Gastrocnemius medialis (tissue), 4 donors: ENCODE measurements at regions of chr4 and their contacts with region 1.

Region 1: DNA sequence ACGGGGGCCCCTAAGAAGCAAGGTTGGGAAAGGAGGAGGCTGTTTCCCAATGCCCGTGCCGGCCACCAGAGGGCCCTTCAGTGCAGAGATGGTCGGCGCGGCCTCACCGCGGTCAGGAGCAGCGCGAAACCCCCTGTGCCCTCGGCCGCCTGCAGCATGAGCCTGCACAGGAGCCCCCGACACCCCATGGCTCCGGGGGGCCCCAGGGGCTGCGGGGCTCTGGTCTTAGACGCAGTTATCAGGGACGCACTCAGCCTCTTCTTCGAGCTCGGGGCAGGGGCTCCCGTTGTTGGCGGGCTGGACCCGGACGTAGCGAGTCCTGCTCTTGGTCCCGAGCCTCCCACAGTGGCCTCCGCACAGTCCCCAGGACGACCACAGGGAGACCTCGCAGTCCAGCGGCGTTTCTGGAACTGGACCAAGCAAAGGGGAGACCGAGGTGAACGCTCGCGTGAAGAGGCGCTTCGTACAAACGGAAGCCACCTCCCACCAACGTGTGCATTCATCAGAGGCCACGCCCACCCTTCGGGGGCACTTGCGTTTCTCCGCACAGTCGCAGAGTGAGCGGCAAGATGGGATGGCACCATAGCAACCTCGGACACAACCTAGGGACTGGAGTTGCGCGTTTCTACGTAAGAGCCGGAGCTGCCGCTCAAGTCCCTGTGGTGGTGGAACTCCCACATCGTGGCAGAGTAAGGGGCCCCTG is 5.0 kb downstream of the SPON2 start:
- DNase-seq: peak; percentile 52 to 70
- ATAC-seq: peak; percentile 78 to 82
- H3K4me3 ChIP-seq: peak overlapping the region; percentile 53 to 74 (median 62)
- H3K27ac ChIP-seq: peak overlapping the region in 1 of 4 donors; percentile 16
- H3K4me1 ChIP-seq: peaks cover 12 to 17% of the 10 kb centered on the region in 2 donors
- H3K27me3 ChIP-seq: peaks cover 4 to 21% (median 9%) of the 10 kb centered on the region in 3 donors
- CTCF ChIP-seq: peak; percentile 90 to 94 (median 93)
- POLR2A ChIP-seq: no peak

Region 2: DNA sequence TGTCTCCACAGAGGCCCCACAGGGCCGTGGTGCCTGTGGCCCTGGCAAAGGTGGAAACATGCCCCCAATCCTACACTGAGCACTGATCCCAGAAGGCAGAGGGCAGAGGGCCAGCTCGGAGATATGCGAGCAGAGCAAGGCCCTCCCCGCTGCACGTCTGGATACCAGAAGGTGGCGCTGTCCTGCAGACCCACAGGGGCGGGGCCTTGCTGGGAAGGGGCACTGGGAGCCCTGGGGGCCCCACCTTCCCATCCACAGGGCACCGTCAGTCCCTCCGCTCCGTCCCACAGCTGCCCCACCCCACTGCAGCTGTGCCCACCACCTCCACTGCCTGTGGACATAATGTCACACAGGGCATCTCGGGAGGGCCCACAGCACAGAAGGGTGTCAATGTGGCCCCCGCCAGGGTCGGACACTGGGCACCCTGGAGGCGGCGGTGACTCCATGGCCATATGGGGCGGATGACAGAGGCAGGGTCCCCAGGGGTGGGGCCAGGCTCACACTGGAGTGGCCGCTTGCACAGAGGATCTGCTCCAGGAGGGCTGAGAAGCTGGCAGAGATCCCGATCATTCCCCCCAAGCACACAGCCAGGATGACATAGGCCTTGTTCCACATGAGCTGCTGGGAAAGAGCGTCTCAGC is 483.3 kb before region 1 on chr4:
- in situ Hi-C with region 1: no loop called
- intact Hi-C with region 1: loop called (anchors 10 kb)
- DNase-seq: peak in 1 of 2 donors; percentile 64
- ATAC-seq: peak in 1 of 2 donors; percentile 14
- H3K4me3 ChIP-seq: no peak overlapping the region
- H3K27ac ChIP-seq: no peak overlapping the region
- H3K4me1 ChIP-seq: peaks cover 17 to 30% of the 10 kb centered on the region in 2 donors
- H3K27me3 ChIP-seq: peaks cover 0 to 19% (median 6%) of the 10 kb centered on the region in 3 donors
- CTCF ChIP-seq: peak; percentile 46 to 71 (median 62)
- POLR2A ChIP-seq: no peak

Region 3: DNA sequence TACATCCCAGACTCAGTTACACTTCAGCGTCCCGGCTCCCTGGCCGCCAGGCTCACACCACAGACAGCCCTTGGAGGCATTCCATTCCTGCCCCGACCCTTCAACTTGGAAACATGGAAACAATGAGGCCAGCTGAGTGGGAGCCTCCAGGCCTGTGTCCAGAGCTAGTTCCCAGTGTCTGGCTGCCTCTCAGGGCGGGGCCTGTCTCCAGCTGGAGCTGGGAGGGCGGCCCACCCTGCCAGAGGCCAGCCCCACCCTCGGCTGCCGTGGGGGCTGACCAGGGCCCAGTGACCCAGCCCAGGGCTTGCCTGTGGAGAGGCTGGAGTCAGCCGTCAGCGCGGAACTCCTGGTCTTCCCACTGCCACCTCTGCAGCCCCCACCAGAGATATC is 42.4 kb after region 1 on chr4:
- in situ Hi-C with region 1: no loop called
- intact Hi-C with region 1: loop called (anchors 2 kb)
- DNase-seq: peak in 1 of 2 donors; percentile 57
- ATAC-seq: peak; percentile 35 to 41
- H3K4me3 ChIP-seq: no peak overlapping the region
- H3K27ac ChIP-seq: peak overlapping the region; percentile 14 to 76 (median 60)
- H3K4me1 ChIP-seq: peaks cover 37 to 44% of the 10 kb centered on the region in 2 donors
- H3K27me3 ChIP-seq: no peaks in the 10 kb centered on the region
- CTCF ChIP-seq: no peak
- POLR2A ChIP-seq: no peak

Region 4: DNA sequence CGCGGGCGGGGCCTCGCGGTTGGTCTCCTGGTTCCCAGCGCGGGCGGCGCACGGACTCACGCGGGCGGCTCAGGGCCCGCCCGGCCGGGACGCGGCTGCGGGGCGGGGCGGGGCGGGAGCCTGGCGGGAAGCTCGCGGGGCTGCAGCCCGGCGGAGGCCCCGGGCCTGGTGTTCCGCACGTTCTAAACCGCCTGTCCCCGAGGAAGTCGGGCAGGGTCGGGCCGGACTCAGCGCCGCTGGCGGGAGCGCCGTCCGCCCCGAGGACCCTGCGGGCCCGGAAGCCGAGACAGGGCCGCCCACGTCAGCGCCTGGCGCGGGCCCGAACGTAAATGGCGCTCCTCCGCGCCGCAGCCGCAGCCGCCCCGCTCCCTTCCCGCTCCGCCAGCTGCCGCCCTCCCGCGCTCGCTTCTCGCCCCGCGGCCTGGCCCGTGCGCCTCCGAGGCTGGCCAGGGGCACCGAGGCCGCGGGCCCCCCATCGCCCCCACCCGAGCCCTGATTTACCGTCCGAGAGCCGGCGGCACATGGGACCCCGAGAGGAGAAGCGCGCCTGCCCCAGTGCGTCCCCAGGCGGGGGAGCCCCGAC is 81.8 kb after region 1 on chr4:
- in situ Hi-C with region 1: no loop called
- intact Hi-C with region 1: loop called (anchors 1 kb)
- DNase-seq: peak; percentile 74 to 78
- ATAC-seq: peak; percentile 78 to 80
- H3K4me3 ChIP-seq: peak overlapping the region; percentile 68 to 85 (median 83)
- H3K27ac ChIP-seq: peak overlapping the region; percentile 94 to 97 (median 96)
- H3K4me1 ChIP-seq: peaks cover 45 to 73% of the 10 kb centered on the region in 2 donors
- H3K27me3 ChIP-seq: no peaks in the 10 kb centered on the region
- CTCF ChIP-seq: no peak
- POLR2A ChIP-seq: peak; percentile 23 to 62

Region 5: DNA sequence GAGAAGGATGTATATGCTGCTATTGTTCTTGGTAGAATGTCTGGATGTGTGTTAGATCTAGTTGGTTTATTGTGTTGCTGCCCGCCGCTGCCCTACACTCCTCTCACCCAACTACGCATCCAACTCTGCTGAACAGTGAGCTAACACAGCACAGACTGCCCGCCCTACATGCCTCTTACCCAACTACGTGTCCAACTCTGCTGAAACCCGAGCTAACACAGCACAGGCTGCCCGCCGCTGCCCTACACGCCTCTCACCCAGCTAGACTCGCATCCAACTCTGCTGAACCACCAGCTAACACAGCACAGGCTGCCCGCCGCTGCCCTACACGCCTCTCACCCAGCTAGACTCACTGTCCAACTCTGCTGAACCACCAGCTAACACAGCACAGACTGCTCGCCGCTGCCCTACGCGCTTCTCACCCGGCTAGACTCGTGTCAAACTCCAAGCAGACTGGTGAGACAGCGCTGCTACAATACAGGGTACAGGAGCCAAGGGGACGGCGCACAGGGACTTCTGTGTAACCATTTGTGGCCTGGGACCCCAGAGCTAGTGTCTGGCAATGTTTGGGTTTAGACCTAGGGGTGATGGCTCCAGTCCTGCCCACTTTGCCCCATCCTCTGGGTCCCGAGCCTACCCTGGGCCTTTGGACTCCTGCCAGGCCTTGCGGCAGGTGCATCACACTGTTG is 93.2 kb after region 1 on chr4:
- in situ Hi-C with region 1: loop called in 1 of 4 experiments (anchors 10 kb)
- intact Hi-C with region 1: no loop called
- DNase-seq: no peak
- ATAC-seq: no peak
- H3K4me3 ChIP-seq: no peak overlapping the region
- H3K27ac ChIP-seq: peak overlapping the region in 1 of 4 donors; percentile 13
- H3K4me1 ChIP-seq: no peaks in the 10 kb centered on the region
- H3K27me3 ChIP-seq: no peaks in the 10 kb centered on the region
- CTCF ChIP-seq: no peak
- POLR2A ChIP-seq: no peak

Region 6: GRCh38 chr4:1266881-1267763 is 99.7 kb after region 1 on chr4:
- in situ Hi-C with region 1: loop called in 1 of 4 experiments (anchors 10 kb)
- intact Hi-C with region 1: loop called (anchors 1 kb)
- DNase-seq: no peak
- ATAC-seq: no peak
- H3K4me3 ChIP-seq: no peak overlapping the region
- H3K27ac ChIP-seq: no peak overlapping the region
- H3K4me1 ChIP-seq: no peaks in the 10 kb centered on the region
- H3K27me3 ChIP-seq: no peaks in the 10 kb centered on the region
- CTCF ChIP-seq: no peak
- POLR2A ChIP-seq: no peak

Region 7: GRCh38 chr4:1289207-1290164 is 122.1 kb after region 1 on chr4 and contains the start of gene MAEA:
- in situ Hi-C with region 1: no loop called
- intact Hi-C with region 1: no loop called
- DNase-seq: peak; percentile 95 to 96
- ATAC-seq: peak; percentile 95 to 98
- H3K4me3 ChIP-seq: peak within 1 kb of the TSS; percentile 78 to 89 (median 84)
- H3K27ac ChIP-seq: peak within 1 kb of the TSS; percentile 84 to 93 (median 88)
- H3K4me1 ChIP-seq: peaks cover 38 to 44% of the 10 kb centered on the region in 2 donors
- H3K27me3 ChIP-seq: no peaks in the 10 kb centered on the region
- CTCF ChIP-seq: no peak
- POLR2A ChIP-seq: peak; percentile 74 to 88
- total RNA-seq, gene MAEA: 30.0 to 42.7 (median 34.3) TPM